OCI-LY7 (cell line): ENCODE measurements at regions of chr6 and their contacts with region 1.

Region 1: GRCh38 chr6:19002976-19003560 is 615.9 kb downstream of the RNF144B start:
- DNase-seq: no peak
- H3K4me3 ChIP-seq: no peak overlapping the region
- H3K27ac ChIP-seq: no peak overlapping the region
- H3K4me1 ChIP-seq: no peaks in the 10 kb centered on the region
- CTCF ChIP-seq: no peak

Region 2: DNA sequence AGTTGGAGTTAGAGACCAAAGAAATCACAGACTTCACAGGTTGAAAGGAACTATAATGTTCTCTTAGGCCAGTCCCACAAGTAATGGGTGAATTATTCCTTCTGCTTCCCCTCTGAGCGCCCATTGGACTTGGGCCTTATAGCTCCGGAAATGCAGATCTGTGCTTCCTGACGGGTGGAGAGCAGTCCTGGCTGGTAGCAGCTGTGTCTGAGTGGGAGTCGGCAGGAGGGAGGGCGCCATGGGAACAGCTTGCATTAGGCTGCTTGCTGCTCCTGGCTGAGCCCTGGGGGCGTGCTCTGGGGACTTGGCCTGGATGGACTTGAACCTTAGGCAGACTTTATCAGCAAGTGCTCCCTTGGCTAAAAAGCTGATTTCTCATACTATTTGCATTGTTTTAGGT is 1278.0 kb before region 1 on chr6:
- CTCF ChIA-PET with region 1: no interaction called
- POLR2A ChIA-PET with region 1: no interaction called
- intact Hi-C with region 1: no loop called
- DNase-seq: no peak
- H3K4me3 ChIP-seq: no peak overlapping the region
- H3K27ac ChIP-seq: no peak overlapping the region
- H3K4me1 ChIP-seq: no peaks in the 10 kb centered on the region
- CTCF ChIP-seq: no peak

Region 3: GRCh38 chr6:18990059-18990978 is 12.7 kb before region 1 on chr6:
- CTCF ChIA-PET with region 1: no interaction called
- POLR2A ChIA-PET with region 1: no interaction called
- intact Hi-C with region 1: loop called (anchors 1 kb)
- DNase-seq: peak; percentile 68
- H3K4me3 ChIP-seq: no peak overlapping the region
- H3K27ac ChIP-seq: no peak overlapping the region
- H3K4me1 ChIP-seq: no peaks in the 10 kb centered on the region
- CTCF ChIP-seq: peak; percentile 88

Region 4: GRCh38 chr6:19297880-19298279 is 294.8 kb after region 1 on chr6:
- CTCF ChIA-PET with region 1: no interaction called
- POLR2A ChIA-PET with region 1: no interaction called
- intact Hi-C with region 1: no loop called
- DNase-seq: no peak
- H3K4me3 ChIP-seq: no peak overlapping the region
- H3K27ac ChIP-seq: no peak overlapping the region
- H3K4me1 ChIP-seq: no peaks in the 10 kb centered on the region
- CTCF ChIP-seq: no peak